Caco-2 (cell line): ENCODE measurements at regions of chr12 and their contacts with region 1.

Region 1: DNA sequence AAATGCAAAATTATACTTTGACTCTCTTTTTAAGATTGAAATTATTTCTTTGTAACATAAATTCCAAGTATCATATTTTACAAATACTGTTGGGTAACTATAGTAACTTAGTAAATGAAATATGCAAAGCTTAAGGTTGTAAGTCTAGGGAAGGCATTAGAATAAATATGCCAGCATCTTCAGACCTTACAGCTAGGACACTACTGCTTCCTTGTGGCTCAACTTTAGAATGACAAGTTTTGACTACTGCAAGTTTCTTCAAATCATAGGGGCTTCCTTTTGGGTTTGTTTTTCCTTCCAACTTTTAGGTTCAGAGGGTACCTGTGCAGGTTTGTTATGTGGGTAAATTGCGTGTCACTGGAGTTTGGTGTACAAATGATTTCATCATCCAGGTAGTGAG is 17.7 kb upstream of the ANP32D start:
- DNase-seq: peak in 1 of 2 experiments; percentile 45
- H3K4me3 ChIP-seq: no peak overlapping the region
- H3K4me3 Mint-ChIP-seq: no peak overlapping the region
- H3K27ac Mint-ChIP-seq: no peak overlapping the region
- H3K4me1 ChIP-seq: peaks cover 3% of the 10 kb centered on the region; the same call in 1 of the 2 replicates
- H3K4me1 Mint-ChIP-seq: no peaks in the 10 kb centered on the region
- H3K27me3 ChIP-seq: no peaks in the 10 kb centered on the region
- H3K27me3 Mint-ChIP-seq: no peaks in the 10 kb centered on the region
- CTCF ChIP-seq: peak; percentile 67

Region 2: DNA sequence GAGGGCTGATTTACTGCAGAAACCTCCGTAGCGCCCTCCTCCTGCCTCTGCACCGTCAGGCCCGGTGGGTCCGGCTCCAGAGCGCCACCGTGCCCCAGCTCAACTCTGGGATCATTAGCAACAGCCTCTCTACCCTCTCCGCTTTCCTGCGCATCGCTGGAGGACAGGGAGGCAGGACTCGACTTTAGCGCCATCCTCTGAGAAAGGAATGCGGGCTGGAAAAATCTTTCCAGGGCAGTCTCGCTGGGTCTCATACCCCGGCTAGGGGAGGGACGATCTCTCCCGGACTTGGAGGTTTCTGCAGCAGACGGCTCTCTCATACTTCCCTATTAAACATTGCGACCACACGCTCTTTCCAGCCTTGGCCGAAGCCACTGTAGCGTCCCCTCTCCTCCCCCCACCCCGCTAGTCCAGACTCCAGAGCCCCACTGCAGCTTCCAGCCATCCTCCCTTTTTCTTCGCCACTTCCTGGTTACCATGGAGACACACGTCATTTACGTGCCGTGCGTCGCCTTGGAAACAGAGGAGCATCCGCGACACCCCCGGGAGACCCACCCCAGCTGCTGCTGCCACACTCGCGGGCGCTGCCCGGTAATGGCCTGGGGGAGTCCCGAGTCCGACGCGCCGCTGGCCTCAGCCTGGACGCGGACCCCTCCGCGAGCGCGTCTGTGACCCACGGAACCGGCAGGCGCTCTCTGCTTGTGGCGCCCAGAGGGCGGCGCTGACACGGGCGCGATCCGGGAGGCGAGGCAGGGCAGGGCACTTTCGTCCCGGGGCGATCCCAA is 271.4 kb before region 1 on chr12 and contains the start of gene CCDC184:
- CTCF ChIA-PET with region 1: interaction called, 4 read pairs
- POLR2A ChIA-PET with region 1: no interaction called
- intact Hi-C with region 1: loop called (anchors 1 kb)
- DNase-seq: peak; percentile 74 to 82
- H3K4me3 ChIP-seq: peak within 1 kb of the TSS; percentile 63
- H3K4me3 Mint-ChIP-seq: peak within 1 kb of the TSS; percentile 77
- H3K27ac Mint-ChIP-seq: peak within 1 kb of the TSS; percentile 45
- H3K4me1 ChIP-seq: peaks cover 6% of the 10 kb centered on the region
- H3K4me1 Mint-ChIP-seq: peaks cover 15% of the 10 kb centered on the region
- H3K27me3 ChIP-seq: no peaks in the 10 kb centered on the region
- H3K27me3 Mint-ChIP-seq: peaks cover 13% of the 10 kb centered on the region
- CTCF ChIP-seq: peak in 1 of 2 experiments; percentile 56
- total RNA-seq, gene CCDC184: 1.00 and 1.0 TPM in 2 replicates

Region 3: GRCh38 chr12:48263617-48264016 is 191.1 kb before region 1 on chr12:
- CTCF ChIA-PET with region 1: no interaction called
- POLR2A ChIA-PET with region 1: no interaction called
- intact Hi-C with region 1: loop called (anchors 10 kb)
- DNase-seq: no peak
- H3K4me3 ChIP-seq: no peak overlapping the region
- H3K4me3 Mint-ChIP-seq: no peak overlapping the region
- H3K27ac Mint-ChIP-seq: no peak overlapping the region
- H3K4me1 ChIP-seq: no peaks in the 10 kb centered on the region
- H3K4me1 Mint-ChIP-seq: no peaks in the 10 kb centered on the region
- H3K27me3 ChIP-seq: peaks cover 2% of the 10 kb centered on the region; the same call in 1 of the 2 replicates
- H3K27me3 Mint-ChIP-seq: peaks cover 26% of the 10 kb centered on the region
- CTCF ChIP-seq: no peak

Region 4: GRCh38 chr12:48286665-48287064 is 168.0 kb before region 1 on chr12:
- CTCF ChIA-PET with region 1: interaction called, 8 read pairs
- POLR2A ChIA-PET with region 1: no interaction called
- intact Hi-C with region 1: loop called (anchors 10 kb)
- DNase-seq: peak in 1 of 2 experiments; percentile 31
- H3K4me3 ChIP-seq: no peak overlapping the region
- H3K4me3 Mint-ChIP-seq: no peak overlapping the region
- H3K27ac Mint-ChIP-seq: no peak overlapping the region
- H3K4me1 ChIP-seq: no peaks in the 10 kb centered on the region
- H3K4me1 Mint-ChIP-seq: no peaks in the 10 kb centered on the region
- H3K27me3 ChIP-seq: no peaks in the 10 kb centered on the region
- H3K27me3 Mint-ChIP-seq: peaks cover 10% of the 10 kb centered on the region
- CTCF ChIP-seq: peak; percentile 44 to 63

Region 5: GRCh38 chr12:48618541-48618940 is 163.9 kb after region 1 on chr12:
- CTCF ChIA-PET with region 1: interaction called, 4 read pairs
- POLR2A ChIA-PET with region 1: no interaction called
- intact Hi-C with region 1: loop called (anchors 5 kb)
- DNase-seq: peak; percentile 78 to 87
- H3K4me3 ChIP-seq: no peak overlapping the region
- H3K4me3 Mint-ChIP-seq: no peak overlapping the region
- H3K27ac Mint-ChIP-seq: no peak overlapping the region
- H3K4me1 ChIP-seq: no peaks in the 10 kb centered on the region
- H3K4me1 Mint-ChIP-seq: no peaks in the 10 kb centered on the region
- H3K27me3 ChIP-seq: no peaks in the 10 kb centered on the region
- H3K27me3 Mint-ChIP-seq: peaks cover 29% of the 10 kb centered on the region
- CTCF ChIP-seq: peak; percentile 97 to 98

Region 6: GRCh38 chr12:48765753-48766162 is 311.1 kb after region 1 on chr12:
- CTCF ChIA-PET with region 1: no interaction called
- POLR2A ChIA-PET with region 1: no interaction called
- intact Hi-C with region 1: no loop called
- DNase-seq: no peak
- H3K4me3 ChIP-seq: no peak overlapping the region
- H3K4me3 Mint-ChIP-seq: no peak overlapping the region
- H3K27ac Mint-ChIP-seq: no peak overlapping the region
- H3K4me1 ChIP-seq: 0 out of 2 replicates have a peak, but pooled peaks cover 3% of the 10 kb centered on the region
- H3K4me1 Mint-ChIP-seq: no peaks in the 10 kb centered on the region
- H3K27me3 ChIP-seq: no peaks in the 10 kb centered on the region
- H3K27me3 Mint-ChIP-seq: no peaks in the 10 kb centered on the region
- CTCF ChIP-seq: no peak